Gastrocnemius medialis (tissue), 4 donors: ENCODE measurements at regions of chr12 and their contacts with region 1.

Region 1: GRCh38 chr12:131949431-131950181 is at the start of gene EP400:
- DNase-seq: peak; percentile 90 to 91
- ATAC-seq: peak; percentile 88 to 93
- H3K4me3 ChIP-seq: peak within 1 kb of the TSS; percentile 74 to 97 (median 88)
- H3K27ac ChIP-seq: peak within 1 kb of the TSS; percentile 74 to 88 (median 87)
- H3K4me1 ChIP-seq: peaks cover 20 to 25% of the 10 kb centered on the region in 2 donors
- H3K27me3 ChIP-seq: no peaks in the 10 kb centered on the region
- CTCF ChIP-seq: peak in 4 of 5 experiments; percentile 50 to 86 (median 74)
- POLR2A ChIP-seq: peak in 1 of 2 donors; percentile 60
- total RNA-seq, gene EP400: 11.9 to 17.4 (median 15.0) TPM

Region 2: DNA sequence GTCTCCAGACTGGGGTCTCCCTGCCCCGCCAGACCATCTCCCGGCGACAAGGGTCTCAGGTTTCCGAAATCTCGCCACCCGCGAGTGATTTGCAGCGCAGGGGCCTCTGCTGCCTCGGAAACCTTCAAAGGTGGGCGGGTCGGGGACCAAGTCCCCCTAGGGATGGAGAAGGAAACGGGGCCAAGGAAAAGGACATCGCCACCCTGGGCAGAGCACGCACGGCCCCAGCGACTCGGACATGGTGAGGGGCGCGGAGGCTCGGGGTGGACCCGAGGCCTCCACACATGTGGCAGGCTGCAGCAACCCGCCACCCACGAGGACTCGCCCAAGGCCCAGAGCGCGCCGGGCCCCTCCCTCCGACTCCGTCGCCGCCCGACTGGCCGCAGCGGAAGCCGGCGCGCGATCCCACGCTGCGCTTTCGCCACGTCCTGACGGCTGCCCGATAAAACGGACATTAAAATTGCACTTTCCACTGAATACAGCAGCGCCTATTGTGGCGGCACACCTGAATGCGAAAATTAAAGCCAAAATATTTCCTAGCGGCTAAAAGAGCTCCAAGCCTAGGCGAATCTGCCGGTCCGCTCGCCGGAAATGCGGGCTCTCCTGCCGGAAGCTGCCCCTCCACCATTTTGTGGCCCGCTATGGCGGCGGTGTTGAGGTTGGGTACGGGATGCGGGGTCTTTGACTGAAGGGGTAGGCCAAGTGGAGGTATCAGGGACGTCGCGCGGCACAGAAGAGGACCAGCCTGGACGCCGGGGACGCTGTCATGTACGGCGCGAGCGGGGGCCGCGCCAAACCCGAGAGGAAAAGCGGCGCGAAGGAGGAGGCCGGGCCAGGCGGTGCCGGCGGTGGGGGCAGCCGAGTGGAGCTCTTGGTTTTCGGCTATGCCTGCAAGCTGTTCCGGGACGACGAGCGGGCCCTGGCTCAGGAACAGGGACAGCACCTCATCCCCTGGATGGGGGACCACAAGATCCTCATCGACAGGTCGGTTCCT is 238.8 kb before region 1 on chr12 and contains the start of gene SFSWAP:
- in situ Hi-C with region 1: no loop called
- intact Hi-C with region 1: loop called (anchors 2 kb)
- DNase-seq: peak; percentile 46 to 50
- ATAC-seq: peak; percentile 93 to 95
- H3K4me3 ChIP-seq: peak within 1 kb of the TSS; percentile 80 to 99 (median 97)
- H3K27ac ChIP-seq: peak within 1 kb of the TSS; percentile 87 to 97 (median 90)
- H3K4me1 ChIP-seq: peaks cover 23 to 24% of the 10 kb centered on the region in 2 donors
- H3K27me3 ChIP-seq: no peaks in the 10 kb centered on the region
- CTCF ChIP-seq: peak in 1 of 5 experiments; percentile 13
- POLR2A ChIP-seq: peak; percentile 52 to 75
- total RNA-seq, gene SFSWAP: 18.0 to 29.7 (median 25.4) TPM

Region 3: DNA sequence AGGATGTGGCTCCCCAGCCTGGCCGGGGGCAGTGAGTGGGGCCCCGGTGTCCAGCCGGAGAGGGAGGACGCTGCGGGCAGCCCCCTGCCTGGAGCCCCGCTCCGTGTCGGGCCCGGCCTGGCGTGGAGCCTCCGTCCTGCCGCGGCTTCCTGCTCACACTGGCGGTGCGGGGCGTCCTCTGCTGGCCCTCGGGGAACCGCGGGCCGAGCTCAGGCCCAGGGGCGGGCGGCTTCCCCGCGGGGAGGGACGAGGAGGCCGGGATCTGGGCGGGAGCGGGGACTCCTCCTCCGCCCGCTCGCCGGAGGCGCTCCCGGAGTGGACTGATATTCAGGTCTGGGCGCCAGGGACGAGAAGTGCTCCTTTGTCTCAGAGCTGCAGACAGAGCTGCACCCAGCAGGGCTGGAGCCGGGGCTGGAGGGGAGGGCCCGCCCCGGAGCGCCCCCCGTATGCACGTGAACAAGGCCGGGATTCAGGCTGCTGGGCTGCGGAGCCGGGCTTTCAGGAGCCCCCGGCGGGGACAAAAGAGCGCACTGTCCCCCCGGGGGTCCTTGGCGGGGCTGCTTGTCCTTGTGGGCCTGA is 119.2 kb before region 1 on chr12:
- in situ Hi-C with region 1: no loop called
- intact Hi-C with region 1: loop called (anchors 5 kb)
- DNase-seq: peak; percentile 42 to 61
- ATAC-seq: peak; percentile 46 to 65
- H3K4me3 ChIP-seq: peak overlapping the region; percentile 50 to 54 (median 52)
- H3K27ac ChIP-seq: peak overlapping the region in 3 of 4 donors; percentile 49 to 55 (median 52)
- H3K4me1 ChIP-seq: peaks cover 11 to 33% of the 10 kb centered on the region in 2 donors
- H3K27me3 ChIP-seq: peaks cover 59 to 78% (median 75%) of the 10 kb centered on the region in 3 donors
- CTCF ChIP-seq: peak; percentile 28 to 61 (median 51)
- POLR2A ChIP-seq: peak in 1 of 2 donors; percentile 21

Region 4: DNA sequence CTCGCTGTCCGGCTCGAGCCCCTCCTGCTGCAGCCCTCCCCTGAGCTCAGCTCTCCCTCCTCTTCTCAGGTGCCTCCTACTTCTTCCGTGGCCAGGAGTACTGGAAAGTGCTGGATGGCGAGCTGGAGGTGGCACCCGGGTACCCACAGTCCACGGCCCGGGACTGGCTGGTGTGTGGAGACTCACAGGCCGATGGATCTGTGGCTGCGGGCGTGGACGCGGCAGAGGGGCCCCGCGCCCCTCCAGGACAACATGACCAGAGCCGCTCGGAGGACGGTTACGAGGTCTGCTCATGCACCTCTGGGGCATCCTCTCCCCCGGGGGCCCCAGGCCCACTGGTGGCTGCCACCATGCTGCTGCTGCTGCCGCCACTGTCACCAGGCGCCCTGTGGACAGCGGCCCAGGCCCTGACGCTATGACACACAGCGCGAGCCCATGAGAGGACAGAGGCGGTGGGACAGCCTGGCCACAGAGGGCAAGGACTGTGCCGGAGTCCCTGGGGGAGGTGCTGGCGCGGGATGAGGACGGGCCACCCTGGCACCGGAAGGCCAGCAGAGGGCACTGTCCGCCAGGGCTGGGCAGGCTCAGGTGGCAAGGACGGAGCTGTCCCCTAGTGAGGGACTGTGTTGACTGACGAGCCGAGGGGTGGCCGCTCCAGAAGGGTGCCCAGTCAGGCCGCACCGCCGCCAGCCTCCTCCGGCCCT is 98.6 kb before region 1 on chr12:
- in situ Hi-C with region 1: no loop called
- intact Hi-C with region 1: loop called (anchors 1 kb)
- DNase-seq: peak in 1 of 2 donors; percentile 46
- ATAC-seq: peak; percentile 62 to 87
- H3K4me3 ChIP-seq: peak overlapping the region in 1 of 4 donors; percentile 21
- H3K27ac ChIP-seq: no peak overlapping the region
- H3K4me1 ChIP-seq: no peaks in the 10 kb centered on the region
- H3K27me3 ChIP-seq: peaks cover 4 to 14% (median 10%) of the 10 kb centered on the region in 3 donors
- CTCF ChIP-seq: peak; percentile 63 to 94 (median 83)
- POLR2A ChIP-seq: no peak

Region 5: GRCh38 chr12:131894313-131894860 is 55.2 kb before region 1 on chr12 and contains the start of gene ULK1:
- in situ Hi-C with region 1: loop called in 1 of 4 experiments (anchors 10 kb)
- intact Hi-C with region 1: loop called (anchors 1 kb)
- DNase-seq: peak; percentile 84 to 92
- ATAC-seq: peak; percentile 38 to 43
- H3K4me3 ChIP-seq: peak within 1 kb of the TSS; percentile 66 to 91 (median 83)
- H3K27ac ChIP-seq: peak within 1 kb of the TSS; percentile 94 to 100 (median 98)
- H3K4me1 ChIP-seq: peaks cover 20 to 24% of the 10 kb centered on the region in 2 donors
- H3K27me3 ChIP-seq: no peaks in the 10 kb centered on the region
- CTCF ChIP-seq: no peak
- POLR2A ChIP-seq: peak; percentile 97 to 98
- total RNA-seq, gene ULK1: 27.9 to 81.2 (median 48.6) TPM

Region 6: GRCh38 chr12:131928711-131929580 is 20.7 kb before region 1 on chr12 and contains the start of gene PUS1:
- in situ Hi-C with region 1: no loop called
- intact Hi-C with region 1: loop called (anchors 1 kb)
- DNase-seq: peak; percentile 92 to 94
- ATAC-seq: peak; percentile 85 to 89
- H3K4me3 ChIP-seq: peak within 1 kb of the TSS; percentile 93 to 100 (median 96)
- H3K27ac ChIP-seq: peak within 1 kb of the TSS; percentile 80 to 93 (median 92)
- H3K4me1 ChIP-seq: peaks cover 10 to 11% of the 10 kb centered on the region in 2 donors
- H3K27me3 ChIP-seq: no peaks in the 10 kb centered on the region
- CTCF ChIP-seq: no peak
- POLR2A ChIP-seq: peak; percentile 66 to 80
- total RNA-seq, gene PUS1: 10.4 to 29.0 (median 12.2) TPM

Region 7: GRCh38 chr12:132083941-132084620 is 134.5 kb after region 1 on chr12:
- in situ Hi-C with region 1: no loop called
- intact Hi-C with region 1: loop called (anchors 1 kb)
- DNase-seq: peak; percentile 90
- ATAC-seq: peak; percentile 87 to 92
- H3K4me3 ChIP-seq: peak overlapping the region; percentile 72 to 98 (median 87)
- H3K27ac ChIP-seq: peak overlapping the region; percentile 93 to 97 (median 94)
- H3K4me1 ChIP-seq: peaks cover 17 to 22% of the 10 kb centered on the region in 2 donors
- H3K27me3 ChIP-seq: no peaks in the 10 kb centered on the region
- CTCF ChIP-seq: peak in 1 of 5 experiments; percentile 5
- POLR2A ChIP-seq: peak; percentile 94 to 96

Region 8: DNA sequence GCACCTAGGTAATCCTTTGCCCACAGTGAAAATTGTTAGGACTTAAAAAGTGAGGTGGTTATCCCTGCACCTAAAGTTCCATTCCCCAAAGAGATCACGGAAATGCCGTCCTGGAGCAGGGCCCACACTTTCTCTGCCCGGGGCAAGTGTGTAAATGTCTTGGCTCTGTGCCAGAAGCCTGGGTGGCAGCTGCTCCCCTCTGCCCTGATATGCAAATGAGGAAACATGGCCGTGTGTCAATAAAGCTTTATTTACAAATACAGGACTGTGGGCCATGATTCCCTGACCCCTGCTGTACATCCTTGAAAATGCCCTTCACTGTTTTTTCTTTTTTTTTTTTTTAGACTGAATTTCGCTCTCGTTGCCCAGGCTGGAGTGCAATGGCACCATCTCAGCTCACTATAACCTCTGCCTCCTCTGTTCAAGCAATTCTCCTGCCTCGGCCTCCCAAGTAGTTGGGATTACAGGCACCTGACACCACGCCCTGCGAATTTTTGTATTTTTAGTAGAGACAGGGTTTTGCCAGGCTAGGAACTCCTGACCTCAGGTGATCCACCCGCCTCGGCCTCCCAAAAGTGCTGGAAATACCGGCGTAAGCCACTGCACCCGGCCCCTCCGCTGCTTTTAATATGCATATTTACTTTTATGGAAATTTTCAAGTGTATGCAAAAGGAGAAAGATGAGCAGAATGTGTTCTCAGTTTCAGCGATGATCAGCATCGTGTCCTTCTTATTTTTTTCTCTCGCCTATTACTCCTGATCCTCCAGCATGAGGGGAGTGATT is 304.3 kb after region 1 on chr12:
- in situ Hi-C with region 1: no loop called
- intact Hi-C with region 1: no loop called
- DNase-seq: no peak
- ATAC-seq: no peak
- H3K4me3 ChIP-seq: no peak overlapping the region
- H3K27ac ChIP-seq: no peak overlapping the region
- H3K4me1 ChIP-seq: no peaks in the 10 kb centered on the region
- H3K27me3 ChIP-seq: peaks cover 0 to 6% (median 0%) of the 10 kb centered on the region in 3 donors
- CTCF ChIP-seq: no peak
- POLR2A ChIP-seq: no peak